IMR-90 (cell line): ENCODE measurements at regions of chr20 and their contacts with region 1.

Region 1: DNA sequence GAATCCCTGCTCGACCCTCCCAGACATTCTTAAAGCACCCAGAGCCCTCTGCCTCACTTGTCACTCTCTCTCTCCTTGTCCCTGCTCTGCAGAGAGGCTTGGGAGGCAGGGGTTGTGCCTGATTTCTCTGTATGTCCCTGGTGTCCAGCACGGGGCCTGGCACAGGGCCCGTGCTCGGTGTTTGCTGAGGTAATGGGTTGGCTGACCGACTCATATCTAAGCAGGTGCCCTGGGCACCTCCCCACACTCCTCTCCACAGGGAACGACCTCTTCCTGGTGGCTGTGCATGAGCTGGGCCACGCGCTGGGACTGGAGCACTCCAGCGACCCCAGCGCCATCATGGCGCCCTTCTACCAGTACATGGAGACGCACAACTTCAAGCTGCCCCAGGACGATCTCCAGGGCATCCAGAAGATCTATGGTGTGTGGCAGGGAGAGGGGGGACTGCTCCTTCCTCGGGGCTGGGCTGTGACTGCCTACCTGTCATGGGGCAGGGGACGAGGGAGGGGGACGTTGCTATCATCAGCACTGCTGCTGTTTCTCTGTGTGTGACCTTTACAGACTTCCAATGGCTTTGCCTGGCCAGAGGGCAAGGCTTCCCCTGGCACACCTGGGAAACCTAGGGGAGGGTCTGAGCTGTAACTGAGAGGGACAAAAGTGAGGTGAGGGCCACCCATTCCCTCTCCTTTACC is 14.2 kb downstream of the MMP24OS start:
- DNase-seq: no peak
- ATAC-seq: peak; percentile 12; the same call in 1 of the 2 replicates
- H3K4me3 ChIP-seq: no peak overlapping the region
- H3K27ac ChIP-seq: peak overlapping the region; percentile 17
- H3K4me1 ChIP-seq: peaks cover 10% of the 10 kb centered on the region
- H3K27me3 ChIP-seq: no peaks in the 10 kb centered on the region
- CTCF ChIP-seq: no peak
- POLR2A ChIP-seq: no peak
- RAD21 ChIP-seq: no peak

Region 2: DNA sequence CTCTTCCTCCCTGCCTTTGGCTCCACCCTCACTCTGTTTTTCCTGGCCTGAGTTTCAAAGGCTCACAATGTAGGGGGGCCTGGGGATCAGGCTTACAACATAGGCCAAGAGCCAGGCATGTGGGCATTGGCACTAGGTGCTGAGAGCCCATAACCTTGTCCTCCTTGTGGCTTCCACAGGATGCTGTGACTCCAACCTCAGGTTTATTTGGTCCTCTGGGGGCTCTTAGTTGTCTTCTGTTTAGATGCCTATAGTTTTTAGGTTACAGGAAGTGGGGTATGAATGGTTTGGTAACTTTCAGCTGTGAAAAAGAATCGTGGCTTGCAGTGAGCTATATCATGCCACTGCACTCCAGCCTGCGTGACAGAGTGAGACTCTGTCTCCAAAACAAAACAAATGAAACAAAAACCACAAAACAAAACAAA is 11.6 kb before region 1 on chr20:
- CTCF ChIA-PET with region 1: interaction called, 4 read pairs
- POLR2A ChIA-PET with region 1: interaction called, 10 read pairs
- dilution Hi-C with region 1: no loop called
- in situ Hi-C with region 1: no loop called
- intact Hi-C with region 1: no loop called
- DNase-seq: no peak
- ATAC-seq: no peak; the same call in 1 of the 2 replicates
- H3K4me3 ChIP-seq: no peak overlapping the region
- H3K27ac ChIP-seq: no peak overlapping the region
- H3K4me1 ChIP-seq: peaks cover 5% of the 10 kb centered on the region; the same call in 1 of the 2 replicates
- H3K27me3 ChIP-seq: no peaks in the 10 kb centered on the region
- CTCF ChIP-seq: no peak
- POLR2A ChIP-seq: no peak
- RAD21 ChIP-seq: no peak